B cell (primary cell): ENCODE measurements at regions of chr1 and their contacts with region 1.

Region 1: GRCh38 chr1:220733090-220733601 is 15.0 kb upstream of the MTARC2 start:
- DNase-seq: peak; percentile 85
- ATAC-seq: peak; percentile 97
- H3K4me3 ChIP-seq: peak overlapping the region in 2 of 5 experiments; percentile 11 to 26
- H3K4me3 Mint-ChIP-seq: peak overlapping the region; percentile 57
- H3K27ac ChIP-seq: no peak overlapping the region
- H3K27ac Mint-ChIP-seq: peak overlapping the region; percentile 72
- H3K4me1 ChIP-seq: peaks cover 11% of the 10 kb centered on the region in 2 donors
- H3K4me1 Mint-ChIP-seq: peaks cover 23% of the 10 kb centered on the region
- H3K27me3 ChIP-seq: no peaks in the 10 kb centered on the region
- H3K27me3 Mint-ChIP-seq: no peaks in the 10 kb centered on the region
- CTCF ChIP-seq: peak; percentile 87

Region 2: GRCh38 chr1:220121791-220122530 is 611.2 kb before region 1 on chr1:
- CTCF ChIA-PET with region 1: no interaction called
- POLR2A ChIA-PET with region 1: no interaction called
- intact Hi-C with region 1: no loop called
- DNase-seq: no peak
- ATAC-seq: no peak
- H3K4me3 ChIP-seq: no peak overlapping the region
- H3K4me3 Mint-ChIP-seq: no peak overlapping the region
- H3K27ac ChIP-seq: no peak overlapping the region
- H3K27ac Mint-ChIP-seq: no peak overlapping the region
- H3K4me1 ChIP-seq: no peaks in the 10 kb centered on the region
- H3K4me1 Mint-ChIP-seq: no peaks in the 10 kb centered on the region
- H3K27me3 ChIP-seq: no peaks in the 10 kb centered on the region
- H3K27me3 Mint-ChIP-seq: no peaks in the 10 kb centered on the region
- CTCF ChIP-seq: no peak

Region 3: DNA sequence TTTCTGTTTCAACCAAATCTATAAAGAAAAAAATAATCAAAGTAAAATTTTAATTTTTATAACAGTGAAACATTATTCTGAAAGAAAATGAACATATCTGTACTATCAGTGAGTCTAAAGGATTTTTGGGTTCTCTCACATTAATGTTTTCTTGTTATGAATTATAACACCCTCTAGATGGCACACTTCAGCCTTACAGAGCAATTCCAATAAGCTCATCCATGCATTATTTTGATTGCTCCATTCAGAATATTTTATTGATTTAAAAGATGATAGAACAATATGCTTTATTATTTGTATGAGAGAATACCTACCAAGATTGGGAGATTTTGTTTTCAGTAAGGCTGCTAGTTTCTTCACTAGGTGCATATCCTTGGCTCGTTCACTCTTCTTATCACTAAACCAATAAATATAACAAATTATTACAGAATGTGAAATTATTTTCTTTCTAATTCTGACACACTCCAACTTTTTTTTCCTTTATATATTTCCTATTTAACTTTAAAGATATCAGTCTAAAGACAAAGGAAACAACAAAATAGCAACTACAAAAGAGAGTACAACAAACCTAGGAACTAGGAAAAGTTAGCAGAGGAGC is 543.3 kb before region 1 on chr1:
- CTCF ChIA-PET with region 1: interaction called, 14 read pairs
- POLR2A ChIA-PET with region 1: no interaction called
- intact Hi-C with region 1: no loop called
- DNase-seq: peak; percentile 19
- ATAC-seq: no peak
- H3K4me3 ChIP-seq: no peak overlapping the region
- H3K4me3 Mint-ChIP-seq: no peak overlapping the region
- H3K27ac ChIP-seq: no peak overlapping the region
- H3K27ac Mint-ChIP-seq: no peak overlapping the region
- H3K4me1 ChIP-seq: no peaks in the 10 kb centered on the region
- H3K4me1 Mint-ChIP-seq: no peaks in the 10 kb centered on the region
- H3K27me3 ChIP-seq: no peaks in the 10 kb centered on the region
- H3K27me3 Mint-ChIP-seq: no peaks in the 10 kb centered on the region
- CTCF ChIP-seq: peak; percentile 71

Region 4: GRCh38 chr1:220294846-220295301 is 438.3 kb before region 1 on chr1:
- CTCF ChIA-PET with region 1: interaction called, 10 read pairs
- POLR2A ChIA-PET with region 1: no interaction called
- intact Hi-C with region 1: loop called (anchors 1 kb)
- DNase-seq: no peak
- ATAC-seq: no peak
- H3K4me3 ChIP-seq: no peak overlapping the region
- H3K4me3 Mint-ChIP-seq: no peak overlapping the region
- H3K27ac ChIP-seq: no peak overlapping the region
- H3K27ac Mint-ChIP-seq: no peak overlapping the region
- H3K4me1 ChIP-seq: no peaks in the 10 kb centered on the region
- H3K4me1 Mint-ChIP-seq: no peaks in the 10 kb centered on the region
- H3K27me3 ChIP-seq: peaks cover 0 to 12% (median 1%) of the 10 kb centered on the region in 4 experiments
- H3K27me3 Mint-ChIP-seq: peaks cover 12% of the 10 kb centered on the region
- CTCF ChIP-seq: no peak

Region 5: DNA sequence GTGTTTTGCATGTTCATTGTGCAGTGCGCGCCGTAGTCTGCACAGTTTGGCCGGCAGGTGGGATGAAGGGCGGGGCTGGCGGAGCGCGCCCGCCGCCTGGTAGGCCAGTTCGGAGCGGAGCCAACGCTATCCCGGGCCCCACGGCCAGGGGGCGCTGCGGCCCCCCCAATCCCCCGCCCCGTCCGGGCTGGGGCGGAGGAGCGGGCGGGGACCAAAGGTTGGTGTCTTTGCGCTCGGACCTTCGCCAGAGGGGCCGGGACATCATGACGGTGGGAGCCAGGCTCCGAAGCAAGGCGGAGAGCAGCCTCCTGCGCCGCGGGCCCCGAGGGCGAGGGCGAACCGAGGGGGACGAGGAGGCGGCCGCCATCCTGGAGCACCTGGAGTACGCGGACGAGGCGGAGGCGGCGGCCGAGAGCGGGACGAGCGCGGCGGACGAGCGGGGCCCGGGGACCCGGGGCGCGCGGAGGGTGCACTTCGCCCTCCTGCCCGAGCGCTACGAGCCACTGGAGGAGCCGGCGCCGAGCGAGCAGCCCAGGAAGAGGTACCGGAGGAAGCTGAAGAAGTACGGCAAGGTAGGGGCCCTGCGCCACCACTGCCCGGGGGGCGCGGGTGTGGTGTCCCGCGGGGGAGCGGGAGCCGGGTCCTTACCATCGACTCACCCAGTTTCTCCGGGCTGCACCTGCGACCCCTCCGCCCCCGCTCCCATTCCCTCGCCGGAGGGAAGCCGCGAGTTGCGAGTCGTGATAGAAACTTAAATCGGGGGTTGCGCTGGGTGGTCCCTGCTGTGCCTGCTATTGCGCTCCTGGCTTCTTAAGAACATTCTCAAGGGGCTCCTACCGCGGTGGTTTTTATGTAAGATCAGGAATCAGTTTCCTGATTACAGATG is 42.8 kb before region 1 on chr1 and contains the start of gene C1orf115:
- CTCF ChIA-PET with region 1: interaction called, 75 read pairs
- POLR2A ChIA-PET with region 1: no interaction called
- intact Hi-C with region 1: loop called (anchors 1 kb)
- DNase-seq: peak; percentile 89
- ATAC-seq: peak; percentile 98
- H3K4me3 ChIP-seq: peak within 1 kb of the TSS in 4 of 5 experiments; percentile 47 to 83 (median 70)
- H3K4me3 Mint-ChIP-seq: peak within 1 kb of the TSS; percentile 93
- H3K27ac ChIP-seq: peak within 1 kb of the TSS in 1 of 2 donors; percentile 49
- H3K27ac Mint-ChIP-seq: peak within 1 kb of the TSS; percentile 87
- H3K4me1 ChIP-seq: peaks cover 14 to 19% of the 10 kb centered on the region in 2 donors
- H3K4me1 Mint-ChIP-seq: peaks cover 21% of the 10 kb centered on the region
- H3K27me3 ChIP-seq: peaks cover 0 to 4% (median 0%) of the 10 kb centered on the region in 4 experiments
- H3K27me3 Mint-ChIP-seq: peaks cover 3% of the 10 kb centered on the region
- CTCF ChIP-seq: peak; percentile 99
- total RNA-seq, gene C1orf115: 19.5 and 21.4 TPM in 2 replicates

Region 6: DNA sequence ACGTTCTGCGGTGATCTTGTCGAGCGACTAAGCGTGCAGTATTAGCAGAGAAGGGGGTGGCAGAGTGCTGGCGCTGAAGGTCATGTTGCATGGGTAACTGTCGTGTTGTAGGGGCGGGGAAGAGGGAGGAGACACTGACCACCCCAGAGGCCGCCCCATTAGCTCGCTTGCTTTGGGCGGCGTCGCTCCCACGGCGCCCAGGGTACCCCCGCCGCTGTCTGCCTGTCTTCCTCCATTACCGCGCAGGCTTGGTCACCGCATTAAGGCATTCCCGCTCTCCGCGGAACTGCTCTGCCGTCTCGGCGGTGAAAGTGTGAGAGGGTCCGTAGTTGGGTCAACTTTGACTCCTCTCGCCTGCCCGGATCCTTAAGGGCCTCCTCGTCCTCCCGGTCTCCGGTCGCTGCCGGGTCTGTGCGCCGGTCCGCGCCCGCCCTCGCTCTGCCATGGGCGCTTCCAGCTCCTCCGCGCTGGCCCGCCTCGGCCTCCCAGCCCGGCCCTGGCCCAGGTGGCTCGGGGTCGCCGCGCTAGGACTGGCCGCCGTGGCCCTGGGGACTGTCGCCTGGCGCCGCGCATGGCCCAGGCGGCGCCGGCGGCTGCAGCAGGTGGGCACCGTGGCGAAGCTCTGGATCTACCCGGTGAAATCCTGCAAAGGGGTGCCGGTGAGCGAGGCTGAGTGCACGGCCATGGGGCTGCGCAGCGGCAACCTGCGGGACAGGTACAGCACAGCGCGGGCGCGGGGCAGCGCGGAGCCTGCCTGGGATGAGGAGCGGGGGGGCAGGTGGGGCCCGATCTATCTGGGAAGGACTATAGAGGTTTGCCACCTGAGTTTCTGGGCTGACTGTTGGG is 15.2 kb after region 1 on chr1 and contains the start of gene MTARC2:
- CTCF ChIA-PET with region 1: interaction called, 20 read pairs
- POLR2A ChIA-PET with region 1: interaction called, 3 read pairs
- intact Hi-C with region 1: no loop called
- DNase-seq: peak; percentile 52
- ATAC-seq: peak; percentile 93
- H3K4me3 ChIP-seq: peak within 1 kb of the TSS in 4 of 5 experiments; percentile 42 to 65 (median 58)
- H3K4me3 Mint-ChIP-seq: peak within 1 kb of the TSS; percentile 92
- H3K27ac ChIP-seq: no peak within 1 kb of the TSS
- H3K27ac Mint-ChIP-seq: peak within 1 kb of the TSS; percentile 59
- H3K4me1 ChIP-seq: peaks cover 16 to 20% of the 10 kb centered on the region in 2 donors
- H3K4me1 Mint-ChIP-seq: peaks cover 24% of the 10 kb centered on the region
- H3K27me3 ChIP-seq: peaks cover 0 to 36% (median 11%) of the 10 kb centered on the region in 4 experiments
- H3K27me3 Mint-ChIP-seq: peaks cover 40% of the 10 kb centered on the region
- CTCF ChIP-seq: no peak
- total RNA-seq, gene MTARC2: 17.2 and 22.6 TPM in 2 replicates